ENCODE measurements at regions of chr11 and their contacts with region 1.

Region 1: DNA sequence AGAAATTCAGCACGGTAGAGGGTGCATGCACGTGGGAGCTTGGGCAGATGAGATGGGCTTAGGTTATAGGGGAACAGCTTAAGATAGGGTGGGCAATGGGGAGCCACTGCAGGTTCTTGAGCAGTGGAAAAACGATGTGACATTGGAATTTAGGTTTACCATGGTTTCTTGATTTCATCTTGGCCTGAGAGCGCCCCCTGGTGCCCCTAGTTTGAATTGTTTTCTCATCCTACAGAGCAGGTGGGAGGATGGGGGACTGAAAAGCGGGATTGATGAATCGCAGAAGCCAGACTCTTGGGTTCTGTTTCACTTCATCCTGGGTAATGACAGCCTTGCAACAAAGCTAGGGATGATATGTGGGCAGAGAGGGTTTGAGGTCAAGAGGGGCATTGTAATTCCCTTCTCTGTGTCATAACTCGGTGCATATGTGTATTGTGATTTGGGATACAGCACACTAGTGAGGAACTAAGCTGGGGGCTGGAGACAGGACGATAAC is 6.7 kb upstream of the MCAM start:
- DNase-seq: no peak
- H3K4me3 ChIP-seq: no peak overlapping the region
- H3K27me3 ChIP-seq: no peaks in the 10 kb centered on the region
- CTCF ChIP-seq: peak; percentile 81

Region 2: GRCh38 chr11:119300198-119300964 is 23.2 kb before region 1 on chr11:
- CTCF ChIA-PET with region 1: interaction called, 14 read pairs
- POLR2A ChIA-PET with region 1: no interaction called
- DNase-seq: no peak
- H3K4me3 ChIP-seq: no peak overlapping the region
- H3K27me3 ChIP-seq: no peaks in the 10 kb centered on the region
- CTCF ChIP-seq: no peak

Region 3: DNA sequence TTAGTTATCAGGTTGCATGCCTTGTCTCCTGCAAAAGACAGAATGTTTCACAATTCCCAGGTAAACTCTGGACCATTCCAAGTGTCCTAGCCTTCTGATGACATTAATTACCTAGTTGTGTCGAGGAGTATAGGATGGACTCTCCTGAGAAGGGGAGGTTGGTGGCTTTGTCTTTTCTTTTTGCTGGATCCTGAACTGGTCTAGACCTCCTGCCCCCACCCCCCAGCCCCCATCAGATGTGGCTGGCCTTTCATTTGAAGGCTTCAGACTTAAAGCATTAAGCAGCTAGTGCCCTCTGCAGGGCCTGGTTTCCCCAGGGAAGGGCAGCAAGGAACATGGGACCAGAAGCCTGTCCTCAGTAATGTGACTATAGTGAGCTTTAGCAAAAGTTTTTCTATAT is 16.4 kb before region 1 on chr11:
- CTCF ChIA-PET with region 1: interaction called, 14 read pairs
- POLR2A ChIA-PET with region 1: no interaction called
- DNase-seq: no peak
- H3K4me3 ChIP-seq: no peak overlapping the region
- H3K27me3 ChIP-seq: no peaks in the 10 kb centered on the region
- CTCF ChIP-seq: peak; percentile 17; the same call in 1 of the 2 replicates

Measured in BJ (cell line).